AG04450 (cell line): ENCODE measurements at regions of chr1 and their contacts with region 1.

Region 1: DNA sequence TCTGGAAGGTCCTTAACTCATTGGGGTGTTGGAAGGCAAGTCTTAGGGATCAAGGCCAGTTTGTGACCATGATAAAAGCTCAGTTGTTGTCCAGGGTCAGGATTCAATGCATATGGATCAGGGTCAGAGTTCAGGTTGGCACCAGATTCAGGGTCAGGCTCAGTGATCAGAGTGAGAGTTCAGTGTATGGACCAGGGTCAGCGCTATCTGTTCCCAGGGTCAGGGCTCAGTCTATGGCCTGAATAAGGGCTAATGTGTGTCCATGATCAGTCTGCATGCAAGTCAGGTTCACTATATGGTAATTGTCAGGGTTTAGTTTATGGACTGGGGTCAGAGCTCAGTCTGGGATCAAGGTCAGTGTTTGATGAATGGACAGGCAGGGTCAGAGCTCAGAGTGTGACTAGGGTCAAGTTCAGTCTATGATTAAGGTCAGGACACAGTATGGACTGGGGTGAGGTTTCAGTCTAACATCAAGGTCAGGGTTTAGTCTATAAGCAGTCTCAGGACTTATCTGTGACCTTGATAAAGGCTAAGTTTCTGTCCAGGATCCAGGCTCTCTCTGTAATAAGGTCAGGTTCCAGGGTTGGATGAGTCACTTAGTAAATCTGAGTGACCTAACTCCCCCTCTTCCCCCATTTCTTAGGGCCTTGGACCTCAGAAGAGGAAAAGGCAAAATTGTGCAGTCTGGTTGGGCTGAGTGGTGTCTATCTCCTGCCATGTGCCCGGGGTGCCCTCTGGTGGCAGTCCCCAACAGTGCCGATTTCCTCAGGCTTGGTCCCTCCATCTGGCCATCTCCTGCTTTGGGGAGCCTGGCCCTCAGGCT is 23.8 kb downstream of the KNCN start:
- DNase-seq: no peak
- H3K4me3 ChIP-seq: no peak overlapping the region
- H3K27ac ChIP-seq: no peak overlapping the region
- H3K27me3 ChIP-seq: peaks cover 63% of the 10 kb centered on the region
- CTCF ChIP-seq: peak; percentile 92

Region 2: DNA sequence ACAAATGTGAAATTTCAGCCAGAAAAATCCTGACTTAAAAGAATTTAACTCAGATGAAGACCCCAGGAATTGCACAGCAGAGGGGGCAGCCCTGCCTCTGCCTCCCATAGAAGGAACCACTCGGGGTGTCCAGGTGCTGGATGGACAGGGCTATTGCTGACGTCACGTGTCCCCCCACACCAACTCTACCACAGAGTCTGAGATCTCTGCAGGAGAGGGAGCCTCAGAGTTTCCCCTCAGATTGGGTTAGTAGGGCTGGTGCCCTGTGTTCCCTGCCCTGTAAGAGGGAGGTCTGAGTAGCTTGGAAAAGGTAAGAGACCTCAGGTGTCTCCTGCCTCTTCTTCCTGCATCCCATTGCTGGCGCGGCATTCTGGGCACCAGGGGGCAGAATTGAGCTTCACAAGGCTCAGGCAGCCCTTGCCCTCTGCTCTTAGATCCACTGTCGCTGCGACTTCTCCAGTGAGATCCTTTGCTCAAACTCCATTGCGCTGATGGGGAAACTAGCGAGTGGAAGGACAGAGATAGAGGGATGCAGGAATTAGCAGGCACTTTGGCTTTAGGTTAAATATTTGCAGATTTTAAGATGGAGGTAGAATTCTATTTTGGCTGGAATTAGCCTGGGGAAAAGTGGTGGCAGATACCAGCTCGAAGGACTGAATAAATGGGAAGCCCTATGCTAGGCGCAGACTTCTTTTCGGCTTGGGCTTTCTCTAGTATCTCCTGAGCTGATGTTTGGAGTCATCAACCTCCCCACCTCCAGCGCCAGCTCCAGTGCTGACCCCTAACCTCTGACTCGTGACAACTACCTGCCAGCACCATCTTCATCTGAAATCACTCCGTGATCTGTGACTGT is 80.8 kb before region 1 on chr1:
- CTCF ChIA-PET with region 1: interaction called, 159 read pairs
- POLR2A ChIA-PET with region 1: no interaction called
- DNase-seq: peak; percentile 10
- H3K4me3 ChIP-seq: no peak overlapping the region
- H3K27ac ChIP-seq: no peak overlapping the region
- H3K27me3 ChIP-seq: peaks cover 68% of the 10 kb centered on the region
- CTCF ChIP-seq: peak; percentile 87

Region 3: GRCh38 chr1:46489638-46490405 is 37.9 kb before region 1 on chr1 and contains the start of gene DMBX1:
- CTCF ChIA-PET with region 1: interaction called, 20 read pairs
- POLR2A ChIA-PET with region 1: no interaction called
- DNase-seq: no peak
- H3K4me3 ChIP-seq: no peak within 1 kb of the TSS
- H3K27ac ChIP-seq: no peak within 1 kb of the TSS
- H3K27me3 ChIP-seq: peaks cover 95% of the 10 kb centered on the region
- CTCF ChIP-seq: no peak
- polyA plus RNA-seq, gene DMBX1: not detected in 2 replicates

Region 4: DNA sequence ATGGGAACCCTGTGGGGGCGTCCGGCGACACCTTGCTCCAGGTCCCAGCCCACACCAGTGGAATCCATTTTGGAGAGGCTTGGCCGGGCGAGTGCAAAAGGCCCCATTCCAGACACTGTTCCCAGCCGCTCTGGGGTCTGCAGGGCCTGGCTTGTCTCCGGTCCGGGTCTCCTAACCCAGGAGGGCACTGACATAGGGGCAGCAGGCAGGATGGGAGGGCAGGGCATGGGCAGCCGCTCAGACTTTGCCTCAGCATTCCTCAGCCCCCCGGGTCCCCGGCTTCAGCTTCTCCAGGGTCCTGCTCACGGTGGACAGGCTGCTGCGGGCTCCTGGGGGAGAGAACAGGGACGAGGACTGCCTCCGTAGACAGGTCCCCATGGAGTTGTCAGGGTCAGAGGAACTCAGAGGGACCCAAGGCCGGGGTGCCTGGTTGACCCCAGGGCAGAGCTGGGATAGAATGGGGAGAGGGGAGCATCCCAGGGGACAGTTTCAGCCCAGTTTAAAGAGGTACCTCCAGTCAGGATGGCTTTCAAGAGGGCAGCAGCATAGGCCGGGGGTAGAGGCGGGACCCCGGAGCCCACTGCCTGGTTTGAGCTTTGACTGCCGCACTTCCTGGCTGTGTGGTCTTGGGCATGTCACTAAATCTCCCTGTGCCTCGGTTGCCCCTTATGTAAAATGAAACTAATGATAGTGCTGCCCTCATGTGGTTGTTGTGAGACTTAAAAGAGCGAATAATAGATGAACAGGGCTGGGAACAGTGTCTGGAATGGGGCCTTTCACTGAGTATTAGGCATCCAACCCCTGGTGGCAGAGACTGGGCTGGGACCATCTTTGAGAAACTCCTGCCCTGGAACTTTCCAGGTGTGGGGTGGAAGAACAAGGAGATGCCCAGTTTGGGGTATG is 20.0 kb after region 1 on chr1:
- CTCF ChIA-PET with region 1: interaction called, 76 read pairs
- POLR2A ChIA-PET with region 1: no interaction called
- DNase-seq: no peak
- H3K4me3 ChIP-seq: peak overlapping the region; percentile 17; the same call in 1 of the 2 replicates
- H3K27ac ChIP-seq: no peak overlapping the region
- H3K27me3 ChIP-seq: peaks cover 63% of the 10 kb centered on the region
- CTCF ChIP-seq: peak; percentile 57

Region 5: DNA sequence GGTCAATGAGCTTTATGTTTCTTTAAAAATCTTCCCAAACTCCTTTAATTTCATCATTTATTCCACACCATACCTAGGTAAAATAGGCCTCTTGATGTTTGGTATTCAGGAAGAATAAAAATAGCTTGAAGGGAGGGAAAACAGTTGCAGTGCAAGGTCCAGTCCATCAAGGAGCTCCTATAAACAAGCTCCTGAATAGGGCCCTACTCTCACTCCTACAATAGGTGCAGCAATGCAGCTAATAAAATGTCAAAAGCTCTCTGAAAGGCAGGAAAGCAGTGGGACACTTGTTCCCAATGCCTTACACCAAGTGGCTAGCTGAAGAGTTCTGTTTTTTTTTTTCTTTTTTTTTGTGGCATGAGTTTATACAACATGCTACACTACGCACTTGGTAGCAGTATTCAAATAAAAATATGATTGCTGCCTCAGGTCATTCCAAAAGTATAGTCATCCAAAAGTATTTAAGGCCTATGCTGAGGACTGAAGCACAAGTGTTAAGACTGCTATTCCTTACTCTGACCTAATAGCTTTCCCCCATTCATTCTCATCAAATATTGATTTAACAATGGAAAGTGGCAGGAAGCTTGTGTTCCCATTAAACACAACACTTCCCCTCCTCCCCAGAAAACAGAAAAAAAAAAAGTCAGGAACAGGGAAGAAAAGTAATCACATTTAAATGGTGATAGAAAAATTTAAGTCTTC is 153.8 kb after region 1 on chr1:
- CTCF ChIA-PET with region 1: no interaction called
- POLR2A ChIA-PET with region 1: no interaction called
- DNase-seq: no peak
- H3K4me3 ChIP-seq: no peak overlapping the region
- H3K27ac ChIP-seq: no peak overlapping the region
- H3K27me3 ChIP-seq: no peaks in the 10 kb centered on the region
- CTCF ChIP-seq: no peak

Region 6: DNA sequence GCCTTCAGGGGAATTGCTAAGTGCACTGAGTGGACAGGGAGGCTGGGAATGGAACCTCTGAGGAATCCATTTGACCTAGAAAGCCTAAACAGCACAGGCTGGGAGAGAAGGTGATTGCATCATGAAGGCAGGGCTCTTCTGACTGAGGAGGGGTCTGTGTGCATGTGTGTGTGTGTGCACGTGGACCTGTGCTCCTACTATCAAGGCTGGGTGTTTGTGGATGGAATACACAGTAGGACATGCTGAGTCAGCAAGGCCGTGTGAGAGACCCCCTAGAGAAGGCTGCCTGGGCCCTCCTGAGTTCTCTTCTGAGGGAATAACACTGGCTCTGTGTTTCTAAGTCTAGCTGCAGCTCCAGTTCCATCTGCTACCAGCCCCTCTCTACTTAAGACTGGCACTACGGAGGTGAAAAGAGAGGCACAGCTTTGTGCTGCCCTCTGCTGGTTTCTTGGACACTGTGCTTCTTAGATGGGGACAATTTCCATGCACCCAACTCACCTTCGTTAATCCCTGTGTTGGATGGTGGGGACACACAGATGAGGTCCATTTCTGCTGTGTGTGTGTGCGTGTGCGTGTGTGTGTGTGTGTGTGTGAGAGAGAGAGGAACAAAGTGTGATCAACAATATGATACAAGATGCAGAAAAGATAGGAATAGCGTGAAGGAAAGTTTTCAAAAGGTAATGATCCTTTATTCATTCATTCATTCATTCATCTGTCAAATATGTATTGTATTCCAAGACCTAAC is 197.5 kb after region 1 on chr1:
- CTCF ChIA-PET with region 1: interaction called, 15 read pairs
- POLR2A ChIA-PET with region 1: no interaction called
- DNase-seq: peak; percentile 67
- H3K4me3 ChIP-seq: no peak overlapping the region
- H3K27ac ChIP-seq: no peak overlapping the region
- H3K27me3 ChIP-seq: peaks cover 11% of the 10 kb centered on the region
- CTCF ChIP-seq: peak; percentile 92